GM12878 (cell line): ENCODE measurements at regions of chr14 and their contacts with region 1.

Region 1: GRCh38 chr14:53126731-53127130 is 26.4 kb downstream of the DDHD1 start:
- DNase-seq: no peak
- ATAC-seq: peak; percentile 45
- H3K4me3 ChIP-seq: peak overlapping the region; percentile 20
- H3K27ac ChIP-seq: peak overlapping the region; percentile 71
- H3K4me1 ChIP-seq: peaks cover 4% of the 10 kb centered on the region
- H3K27me3 ChIP-seq: no peaks in the 10 kb centered on the region
- CTCF ChIP-seq: no peak
- EP300 ChIP-seq: no peak
- POLR2A ChIP-seq: no peak
- RAD21 ChIP-seq: no peak

Region 2: GRCh38 chr14:53137568-53138203 is 11.0 kb after region 1 on chr14:
- CTCF ChIA-PET with region 1: interaction called, 3 read pairs
- POLR2A ChIA-PET with region 1: no interaction called
- RAD21 ChIA-PET with region 1: interaction called, 3 read pairs
- SMC1A ChIA-PET with region 1: interaction called, 17 read pairs
- in situ Hi-C with region 1: no loop called
- intact Hi-C with region 1: no loop called
- DNase-seq: no peak
- ATAC-seq: no peak
- H3K4me3 ChIP-seq: no peak overlapping the region
- H3K27ac ChIP-seq: no peak overlapping the region
- H3K4me1 ChIP-seq: peaks cover 5% of the 10 kb centered on the region; the same call in 1 of the 2 replicates
- H3K27me3 ChIP-seq: no peaks in the 10 kb centered on the region
- CTCF ChIP-seq: no peak
- EP300 ChIP-seq: no peak
- POLR2A ChIP-seq: no peak
- RAD21 ChIP-seq: no peak